ENCODE measurements at regions of chr9 and their contacts with region 1.

Region 1: GRCh38 chr9:88991066-88992034 is at the start of gene S1PR3:
- DNase-seq: peak; percentile 69
- ATAC-seq: peak; percentile 27
- H3K4me3 Mint-ChIP-seq: peak within 1 kb of the TSS; percentile 66
- H3K27ac Mint-ChIP-seq: no peak within 1 kb of the TSS
- H3K4me1 Mint-ChIP-seq: peaks cover 31% of the 10 kb centered on the region
- H3K27me3 Mint-ChIP-seq: peaks cover 42% of the 10 kb centered on the region
- total RNA-seq, gene S1PR3: 0.56 to 1.2 TPM

Region 2: DNA sequence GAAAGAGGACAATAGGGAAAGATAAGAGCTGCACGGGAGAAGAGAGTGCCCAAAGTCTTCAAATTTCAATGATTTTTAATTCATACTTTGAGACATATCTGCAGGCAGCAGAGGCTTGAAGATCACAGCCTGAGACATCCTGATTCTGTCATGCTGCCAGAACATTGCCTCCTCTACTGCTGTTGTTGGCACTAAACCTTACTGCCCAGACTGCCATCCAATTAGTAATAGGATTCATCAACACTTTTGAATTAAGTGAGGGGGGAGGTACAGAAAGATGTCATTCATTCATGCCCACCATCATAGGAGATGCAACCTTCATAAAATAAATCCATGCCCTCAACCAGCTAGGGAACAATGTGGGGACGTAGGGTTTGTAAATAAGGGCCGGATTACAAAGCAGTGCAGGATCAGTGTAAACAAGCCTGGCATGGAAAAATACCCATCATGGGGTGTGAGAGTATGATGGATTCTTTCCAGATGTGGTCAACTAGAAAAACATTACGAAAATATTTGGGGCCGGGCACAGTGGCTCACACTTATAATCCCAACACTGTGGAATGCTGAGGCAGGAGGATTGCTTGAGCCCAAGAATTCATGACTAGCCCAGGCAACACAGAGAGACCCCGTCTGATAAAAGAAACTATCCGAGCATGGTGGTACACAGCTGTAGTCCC is 1615.8 kb before region 1 on chr9:
- CTCF ChIA-PET with region 1: no interaction called
- POLR2A ChIA-PET with region 1: no interaction called
- intact Hi-C with region 1: loop called in 1 of 2 experiments (anchors 10 kb)
- DNase-seq: no peak
- ATAC-seq: no peak
- H3K4me3 Mint-ChIP-seq: no peak overlapping the region
- H3K27ac Mint-ChIP-seq: no peak overlapping the region
- H3K4me1 Mint-ChIP-seq: peaks cover 15% of the 10 kb centered on the region
- H3K27me3 Mint-ChIP-seq: peaks cover 37% of the 10 kb centered on the region

Region 3: GRCh38 chr9:88303721-88304451 is 687.5 kb before region 1 on chr9:
- CTCF ChIA-PET with region 1: no interaction called
- POLR2A ChIA-PET with region 1: no interaction called
- intact Hi-C with region 1: loop called in 1 of 2 experiments (anchors 10 kb)
- DNase-seq: peak; percentile 81
- ATAC-seq: peak; percentile 91
- H3K4me3 Mint-ChIP-seq: no peak overlapping the region
- H3K27ac Mint-ChIP-seq: peak overlapping the region; percentile 68
- H3K4me1 Mint-ChIP-seq: peaks cover 27% of the 10 kb centered on the region
- H3K27me3 Mint-ChIP-seq: peaks cover 18% of the 10 kb centered on the region

Region 4: DNA sequence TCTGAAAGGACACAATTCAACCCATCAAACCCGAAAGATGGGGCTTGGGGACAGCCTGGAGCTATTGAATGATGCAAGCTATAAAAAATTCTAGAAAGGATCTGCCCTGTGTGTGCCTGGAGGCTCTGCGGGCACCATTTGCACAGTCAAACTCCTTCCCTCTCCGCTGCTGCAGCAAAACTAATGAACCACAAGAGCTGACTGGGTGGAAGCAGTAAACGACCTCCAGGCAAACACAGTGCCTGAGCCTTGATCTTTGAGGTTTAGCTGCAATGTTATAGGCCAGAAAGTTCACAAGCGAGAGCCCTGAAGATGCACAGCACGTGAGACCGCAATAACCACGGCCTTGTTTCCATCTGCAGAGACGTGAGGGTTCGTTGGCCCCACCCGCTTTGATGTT is 69.3 kb before region 1 on chr9:
- CTCF ChIA-PET with region 1: no interaction called
- POLR2A ChIA-PET with region 1: no interaction called
- intact Hi-C with region 1: loop called in 1 of 2 experiments (anchors 2 kb)
- DNase-seq: peak; percentile 74
- ATAC-seq: peak; percentile 70
- H3K4me3 Mint-ChIP-seq: no peak overlapping the region
- H3K27ac Mint-ChIP-seq: no peak overlapping the region
- H3K4me1 Mint-ChIP-seq: peaks cover 44% of the 10 kb centered on the region
- H3K27me3 Mint-ChIP-seq: peaks cover 16% of the 10 kb centered on the region

Region 5: DNA sequence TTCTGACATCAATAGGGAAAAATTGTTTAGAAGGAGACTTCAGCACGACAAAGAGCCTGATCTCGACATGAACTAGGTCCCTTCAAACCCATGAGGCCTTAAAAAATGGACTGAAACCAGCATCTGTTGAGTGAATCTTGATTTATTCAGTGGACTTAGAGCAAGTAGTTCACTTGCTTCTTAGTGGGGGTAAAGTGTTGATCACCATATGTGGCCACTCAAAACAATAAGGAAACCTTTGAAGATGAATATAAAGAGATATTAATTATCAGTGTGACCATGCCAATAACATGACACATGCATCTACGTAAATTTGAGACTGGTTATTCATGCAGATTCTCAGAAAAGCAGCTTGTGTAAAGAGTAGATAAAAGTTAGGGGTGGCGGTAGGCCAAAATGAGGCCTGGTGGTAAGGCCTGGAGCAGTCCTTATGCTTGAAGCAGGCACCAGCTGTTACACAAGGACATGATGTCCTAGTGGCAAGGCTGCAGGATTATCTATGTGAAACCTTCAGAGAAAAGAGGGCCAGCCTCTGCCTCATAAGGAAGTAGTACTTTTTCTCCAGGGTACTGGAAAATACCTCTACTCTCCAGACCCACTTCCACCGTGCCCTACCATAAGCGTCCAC is 61.2 kb after region 1 on chr9:
- CTCF ChIA-PET with region 1: no interaction called
- POLR2A ChIA-PET with region 1: no interaction called
- intact Hi-C with region 1: no loop called
- DNase-seq: no peak
- ATAC-seq: no peak
- H3K4me3 Mint-ChIP-seq: no peak overlapping the region
- H3K27ac Mint-ChIP-seq: no peak overlapping the region
- H3K4me1 Mint-ChIP-seq: no peaks in the 10 kb centered on the region
- H3K27me3 Mint-ChIP-seq: peaks cover 8% of the 10 kb centered on the region

Region 6: GRCh38 chr9:89122949-89123348 is 131.6 kb after region 1 on chr9:
- CTCF ChIA-PET with region 1: no interaction called
- POLR2A ChIA-PET with region 1: no interaction called
- intact Hi-C with region 1: no loop called
- DNase-seq: no peak
- ATAC-seq: no peak
- H3K4me3 Mint-ChIP-seq: no peak overlapping the region
- H3K27ac Mint-ChIP-seq: no peak overlapping the region
- H3K4me1 Mint-ChIP-seq: no peaks in the 10 kb centered on the region
- H3K27me3 Mint-ChIP-seq: peaks cover 26% of the 10 kb centered on the region

Region 7: DNA sequence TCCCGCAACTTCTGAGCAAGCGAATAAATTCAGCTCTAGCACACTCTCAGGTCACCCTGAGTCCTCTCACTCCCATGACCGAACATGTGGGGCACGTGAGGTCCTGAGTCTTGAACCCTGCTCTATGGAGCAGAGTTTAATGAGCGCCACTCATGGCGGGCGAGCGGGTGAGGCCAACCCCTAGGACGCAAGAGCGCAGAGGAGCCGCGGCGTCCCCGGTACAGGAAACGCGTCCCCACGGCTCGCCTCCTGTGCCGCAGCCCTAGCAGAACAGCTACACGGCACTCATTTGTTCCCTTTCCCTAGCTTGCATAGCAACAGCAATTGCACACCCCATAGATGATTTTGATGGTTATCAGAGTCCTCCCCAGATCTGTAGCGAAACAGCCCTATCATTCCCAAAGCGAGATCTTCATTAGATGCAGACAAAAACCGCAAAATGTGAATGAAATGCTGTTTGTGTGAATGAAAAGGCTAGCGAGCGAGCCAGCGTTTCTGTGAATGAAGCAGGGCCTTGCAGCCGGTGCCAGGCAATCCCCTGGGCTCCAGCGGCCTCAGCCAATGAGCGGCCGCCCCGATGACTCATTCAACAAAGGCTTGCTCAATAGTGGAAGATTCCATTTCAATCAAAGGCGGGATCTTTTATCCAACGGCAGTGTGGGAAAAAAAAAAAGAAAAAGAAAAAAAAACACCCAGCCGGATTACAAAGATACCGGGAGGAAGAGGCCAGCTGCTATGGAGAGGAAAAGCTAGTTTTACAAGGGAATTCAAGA is 188.7 kb after region 1 on chr9:
- CTCF ChIA-PET with region 1: no interaction called
- POLR2A ChIA-PET with region 1: no interaction called
- intact Hi-C with region 1: loop called in 1 of 2 experiments (anchors 5 kb)
- DNase-seq: peak; percentile 84
- ATAC-seq: peak; percentile 90
- H3K4me3 Mint-ChIP-seq: peak overlapping the region; percentile 55
- H3K27ac Mint-ChIP-seq: peak overlapping the region; percentile 1
- H3K4me1 Mint-ChIP-seq: peaks cover 24% of the 10 kb centered on the region
- H3K27me3 Mint-ChIP-seq: peaks cover 46% of the 10 kb centered on the region

Region 8: GRCh38 chr9:89442981-89443814 is 451.8 kb after region 1 on chr9:
- CTCF ChIA-PET with region 1: no interaction called
- POLR2A ChIA-PET with region 1: no interaction called
- intact Hi-C with region 1: no loop called
- DNase-seq: no peak
- ATAC-seq: peak; percentile 7
- H3K4me3 Mint-ChIP-seq: no peak overlapping the region
- H3K27ac Mint-ChIP-seq: peak overlapping the region; percentile 94
- H3K4me1 Mint-ChIP-seq: peaks cover 93% of the 10 kb centered on the region
- H3K27me3 Mint-ChIP-seq: no peaks in the 10 kb centered on the region

Measured in activated CD4-positive, alpha-beta T cell treated with anti-CD3 and anti-CD28 coated beads for 36 hours (primary cell).